Tibial artery (tissue), 4 donors: ENCODE measurements at regions of chr2 and their contacts with region 1.

Region 1: GRCh38 chr2:171999604-172000469 is at the start of gene METAP1D:
- DNase-seq: peak; percentile 71 to 91
- H3K4me3 ChIP-seq: peak within 1 kb of the TSS; percentile 59 to 60
- H3K27ac ChIP-seq: no peak within 1 kb of the TSS
- H3K4me1 ChIP-seq: peaks cover 0 to 11% (median 3%) of the 10 kb centered on the region in 4 donors
- H3K27me3 ChIP-seq: peaks cover 0 to 2% of the 10 kb centered on the region in 2 donors
- CTCF ChIP-seq: no peak

Region 2: DNA sequence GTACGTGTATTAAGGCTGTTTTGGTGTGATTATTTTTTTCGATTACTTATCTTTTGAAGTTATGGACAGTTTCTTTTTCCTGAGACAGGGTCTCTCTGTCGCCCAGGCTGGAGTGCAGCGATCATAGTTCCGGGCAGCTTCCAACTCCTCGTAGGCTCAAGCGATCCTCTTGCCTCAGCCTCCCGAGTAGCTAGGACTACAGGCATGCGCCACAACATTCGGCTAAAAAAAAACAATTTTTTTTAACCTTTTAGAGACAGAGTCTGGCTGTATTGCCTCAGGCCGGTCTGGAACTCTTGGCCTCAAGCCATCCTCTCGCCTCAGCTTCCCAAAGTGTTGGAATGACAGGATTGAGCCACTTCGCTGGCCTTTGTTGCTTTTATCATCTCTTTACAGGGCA is 76.6 kb before region 1 on chr2:
- intact Hi-C with region 1: no loop called
- DNase-seq: no peak
- H3K4me3 ChIP-seq: peak overlapping the region; percentile 87 to 96
- H3K27ac ChIP-seq: peak overlapping the region; percentile 92 to 94
- H3K4me1 ChIP-seq: peaks cover 5 to 20% (median 18%) of the 10 kb centered on the region in 4 donors
- H3K27me3 ChIP-seq: no peaks in the 10 kb centered on the region
- CTCF ChIP-seq: no peak

Region 3: GRCh38 chr2:172095146-172095904 is 95.5 kb after region 1 on chr2:
- intact Hi-C with region 1: loop called (anchors 5 kb)
- DNase-seq: no peak
- H3K4me3 ChIP-seq: peak overlapping the region; percentile 28 to 46
- H3K27ac ChIP-seq: no peak overlapping the region
- H3K4me1 ChIP-seq: peaks cover 0 to 60% (median 53%) of the 10 kb centered on the region in 4 donors
- H3K27me3 ChIP-seq: peaks cover 6 to 100% of the 10 kb centered on the region in 2 donors
- CTCF ChIP-seq: no peak